ENCODE measurements at regions of chr4 and their contacts with region 1.

Region 1: GRCh38 chr4:90572996-90573395 is 445.8 kb downstream of the CCSER1 start:
- DNase-seq: peak; percentile 9
- H3K4me3 ChIP-seq: no peak overlapping the region
- H3K27ac ChIP-seq: no peak overlapping the region
- H3K4me1 ChIP-seq: no peaks in the 10 kb centered on the region
- H3K27me3 ChIP-seq: no peaks in the 10 kb centered on the region
- CTCF ChIP-seq: no peak

Region 2: GRCh38 chr4:90425893-90426292 is 147.1 kb before region 1 on chr4:
- CTCF ChIA-PET with region 1: no interaction called
- dilution Hi-C with region 1: no loop called
- in situ Hi-C with region 1: no loop called
- intact Hi-C with region 1: loop called (anchors 10 kb)
- DNase-seq: no peak
- H3K4me3 ChIP-seq: no peak overlapping the region
- H3K27ac ChIP-seq: no peak overlapping the region
- H3K4me1 ChIP-seq: no peaks in the 10 kb centered on the region
- H3K27me3 ChIP-seq: no peaks in the 10 kb centered on the region
- CTCF ChIP-seq: no peak